Naive thymus-derived CD4-positive, alpha-beta T cell (primary cell): ENCODE measurements at regions of chr13 and their contacts with region 1.

Region 1: DNA sequence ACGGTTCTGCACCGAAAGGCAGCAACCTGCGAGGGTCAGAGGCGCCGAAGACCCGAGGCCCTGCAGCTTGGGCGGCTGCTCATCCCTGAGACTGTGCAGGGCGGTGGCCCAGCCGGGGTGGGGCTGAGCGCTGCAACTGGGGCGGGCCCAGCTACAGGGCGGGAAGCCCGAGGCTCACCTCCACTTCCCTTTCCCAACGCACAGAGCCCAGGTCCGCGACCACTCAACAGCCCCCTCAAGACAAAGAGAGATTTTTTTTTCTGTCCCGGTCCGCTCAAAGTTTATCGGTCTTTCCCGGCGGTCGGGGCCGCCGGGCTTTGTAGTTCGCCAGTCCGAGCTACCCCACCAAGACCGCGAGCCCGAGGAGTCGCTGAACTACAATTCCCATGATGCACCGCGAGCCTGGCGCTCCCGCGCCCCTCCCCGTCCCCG is 573 bp downstream of the KATNAL1 start:
- DNase-seq: peak; percentile 78 to 91 (median 88)
- ATAC-seq: peak; percentile 95
- H3K4me3 ChIP-seq: peak overlapping the region; percentile 96
- H3K4me3 Mint-ChIP-seq: peak overlapping the region; percentile 79 to 92 (median 89)
- H3K27ac ChIP-seq: peak overlapping the region; percentile 78
- H3K27ac Mint-ChIP-seq: peak overlapping the region in 8 of 9 donors; percentile 37 to 89 (median 82)
- H3K4me1 ChIP-seq: peaks cover 0 to 4% of the 10 kb centered on the region in 2 donors
- H3K4me1 Mint-ChIP-seq: peaks cover 0 to 48% (median 7%) of the 10 kb centered on the region in 7 donors
- H3K27me3 ChIP-seq: no peaks in the 10 kb centered on the region
- H3K27me3 Mint-ChIP-seq: no peaks in the 10 kb centered on the region

Region 2: GRCh38 chr13:29595380-29596063 is 711.3 kb before region 1 on chr13 and contains the start of gene SLC7A1:
- CTCF ChIA-PET with region 1: no interaction called
- POLR2A ChIA-PET with region 1: no interaction called
- intact Hi-C with region 1: loop called (anchors 1 to 2 kb)
- DNase-seq: peak; percentile 74 to 93 (median 85)
- ATAC-seq: peak; percentile 95
- H3K4me3 ChIP-seq: peak within 1 kb of the TSS; percentile 73
- H3K4me3 Mint-ChIP-seq: peak within 1 kb of the TSS; percentile 88 to 94 (median 90)
- H3K27ac ChIP-seq: peak within 1 kb of the TSS; percentile 82
- H3K27ac Mint-ChIP-seq: peak within 1 kb of the TSS; percentile 74 to 96 (median 87)
- H3K4me1 ChIP-seq: peaks cover 6 to 7% of the 10 kb centered on the region in 2 donors
- H3K4me1 Mint-ChIP-seq: peaks cover 26 to 49% (median 43%) of the 10 kb centered on the region in 7 donors
- H3K27me3 ChIP-seq: no peaks in the 10 kb centered on the region
- H3K27me3 Mint-ChIP-seq: peaks cover 0 to 3% (median 2%) of the 10 kb centered on the region in 5 donors
- total RNA-seq, gene SLC7A1: 12.2 to 63.8 (median 28.2) TPM

Region 3: DNA sequence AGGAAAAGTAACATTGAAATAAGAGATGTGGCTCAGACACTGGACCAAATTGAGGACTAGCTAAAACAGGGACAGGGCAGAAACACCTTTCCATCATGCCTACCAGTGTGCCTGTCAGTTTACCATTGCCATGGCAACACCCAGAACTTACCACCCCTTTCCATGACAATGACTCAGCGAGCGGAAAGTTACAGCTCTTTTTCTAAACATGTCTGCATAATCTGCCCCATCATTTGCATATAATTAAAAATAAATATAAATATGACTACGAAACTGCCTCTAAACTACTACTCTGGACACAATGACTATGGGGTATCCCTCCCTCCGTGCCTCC is 552.3 kb before region 1 on chr13:
- CTCF ChIA-PET with region 1: no interaction called
- POLR2A ChIA-PET with region 1: no interaction called
- intact Hi-C with region 1: no loop called
- DNase-seq: no peak
- ATAC-seq: no peak
- H3K4me3 ChIP-seq: no peak overlapping the region
- H3K4me3 Mint-ChIP-seq: no peak overlapping the region
- H3K27ac ChIP-seq: no peak overlapping the region
- H3K27ac Mint-ChIP-seq: no peak overlapping the region
- H3K4me1 ChIP-seq: peaks cover 0 to 3% of the 10 kb centered on the region in 2 donors
- H3K4me1 Mint-ChIP-seq: peaks cover 6 to 11% (median 6%) of the 10 kb centered on the region in 7 donors
- H3K27me3 ChIP-seq: no peaks in the 10 kb centered on the region
- H3K27me3 Mint-ChIP-seq: peaks cover 0 to 14% (median 4%) of the 10 kb centered on the region in 5 donors

Region 4: DNA sequence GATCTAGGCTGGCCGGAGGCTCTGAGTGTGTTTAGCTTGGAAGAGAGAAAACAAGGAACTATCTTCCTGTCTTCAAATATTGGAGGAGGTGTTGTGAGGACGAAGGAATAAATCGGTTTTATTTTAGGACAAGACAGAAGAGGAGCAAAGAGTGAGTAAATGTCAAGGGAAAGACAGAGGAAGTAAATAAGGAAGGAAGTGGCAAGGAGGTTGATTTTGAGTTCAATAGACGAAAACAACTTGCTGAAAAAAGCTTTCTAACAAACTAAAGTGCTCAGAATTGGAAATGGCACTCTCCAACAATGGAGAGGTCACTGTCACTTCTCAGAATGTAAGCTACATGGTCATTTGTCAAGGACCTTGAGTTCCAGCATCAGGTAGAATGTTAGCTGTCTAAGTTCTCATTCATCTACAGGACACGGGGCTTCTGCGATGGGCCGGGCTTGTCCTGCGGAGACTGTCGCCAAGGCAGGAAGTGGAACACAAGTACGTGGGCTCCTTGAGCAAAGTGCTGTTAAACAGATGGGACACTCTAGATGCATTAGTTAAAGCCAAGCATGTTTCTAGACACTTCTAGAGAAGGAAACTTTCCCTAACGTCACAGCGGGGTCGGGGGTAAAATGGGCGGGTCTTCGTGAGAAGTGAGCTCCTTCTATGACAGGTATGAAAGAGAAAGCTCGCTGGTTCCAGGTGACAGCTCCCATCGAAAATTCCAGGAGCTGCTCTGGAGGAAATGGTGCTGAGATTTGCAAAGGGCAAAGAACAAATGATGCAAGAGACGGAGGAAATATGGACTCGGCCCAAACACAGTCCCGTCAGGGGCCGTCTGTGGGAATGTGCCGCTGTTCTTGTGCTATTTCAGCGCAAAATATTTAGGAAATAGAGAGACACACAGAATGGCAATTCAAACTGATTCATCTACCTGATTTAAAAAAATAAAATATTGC is 352.4 kb before region 1 on chr13:
- CTCF ChIA-PET with region 1: no interaction called
- POLR2A ChIA-PET with region 1: no interaction called
- intact Hi-C with region 1: no loop called
- DNase-seq: peak in 8 of 9 donors; percentile 33 to 77 (median 70)
- ATAC-seq: peak; percentile 79
- H3K4me3 ChIP-seq: peak overlapping the region; percentile 43
- H3K4me3 Mint-ChIP-seq: peak overlapping the region; percentile 72 to 90 (median 84)
- H3K27ac ChIP-seq: peak overlapping the region; percentile 69
- H3K27ac Mint-ChIP-seq: peak overlapping the region; percentile 79 to 94 (median 89)
- H3K4me1 ChIP-seq: peaks cover 20 to 30% of the 10 kb centered on the region in 2 donors
- H3K4me1 Mint-ChIP-seq: peaks cover 22 to 81% (median 53%) of the 10 kb centered on the region in 7 donors
- H3K27me3 ChIP-seq: no peaks in the 10 kb centered on the region
- H3K27me3 Mint-ChIP-seq: peaks cover 0 to 15% (median 0%) of the 10 kb centered on the region in 5 donors

Region 5: GRCh38 chr13:30346153-30346788 is 39.5 kb after region 1 on chr13:
- CTCF ChIA-PET with region 1: interaction called, 4 read pairs
- POLR2A ChIA-PET with region 1: interaction called, 14 read pairs
- intact Hi-C with region 1: loop called in 1 of 2 experiments (anchors 2 kb)
- DNase-seq: peak in 7 of 9 donors; percentile 59 to 86 (median 73)
- ATAC-seq: peak; percentile 94
- H3K4me3 ChIP-seq: peak overlapping the region; percentile 7
- H3K4me3 Mint-ChIP-seq: peak overlapping the region; percentile 46 to 82 (median 75)
- H3K27ac ChIP-seq: no peak overlapping the region
- H3K27ac Mint-ChIP-seq: peak overlapping the region; percentile 23 to 84 (median 62)
- H3K4me1 ChIP-seq: peaks cover 29 to 31% of the 10 kb centered on the region in 2 donors
- H3K4me1 Mint-ChIP-seq: peaks cover 35 to 60% (median 48%) of the 10 kb centered on the region in 7 donors
- H3K27me3 ChIP-seq: no peaks in the 10 kb centered on the region
- H3K27me3 Mint-ChIP-seq: peaks cover 0 to 2% (median 0%) of the 10 kb centered on the region in 5 donors

Region 6: GRCh38 chr13:30422054-30422839 is 115.5 kb after region 1 on chr13 and contains the start of gene UBE2L5:
- CTCF ChIA-PET with region 1: no interaction called
- POLR2A ChIA-PET with region 1: interaction called, 3 read pairs
- intact Hi-C with region 1: loop called in 1 of 2 experiments (anchors 1 kb)
- DNase-seq: peak; percentile 41 to 89 (median 56)
- ATAC-seq: peak; percentile 92
- H3K4me3 ChIP-seq: peak within 1 kb of the TSS; percentile 67
- H3K4me3 Mint-ChIP-seq: peak within 1 kb of the TSS; percentile 80 to 94 (median 89)
- H3K27ac ChIP-seq: peak within 1 kb of the TSS; percentile 38
- H3K27ac Mint-ChIP-seq: peak within 1 kb of the TSS; percentile 64 to 93 (median 86)
- H3K4me1 ChIP-seq: no peaks in the 10 kb centered on the region
- H3K4me1 Mint-ChIP-seq: peaks cover 7 to 29% (median 15%) of the 10 kb centered on the region in 7 donors
- H3K27me3 ChIP-seq: no peaks in the 10 kb centered on the region
- H3K27me3 Mint-ChIP-seq: no peaks in the 10 kb centered on the region
- total RNA-seq, gene UBE2L5: not detected

Region 7: GRCh38 chr13:30739761-30740642 is 433.2 kb after region 1 on chr13:
- CTCF ChIA-PET with region 1: no interaction called
- POLR2A ChIA-PET with region 1: no interaction called
- intact Hi-C with region 1: loop called in 1 of 2 experiments (anchors 5 kb)
- DNase-seq: peak in 8 of 9 donors; percentile 16 to 61 (median 32)
- ATAC-seq: peak; percentile 47
- H3K4me3 ChIP-seq: peak overlapping the region; percentile 29
- H3K4me3 Mint-ChIP-seq: peak overlapping the region; percentile 79 to 87 (median 82)
- H3K27ac ChIP-seq: no peak overlapping the region
- H3K27ac Mint-ChIP-seq: peak overlapping the region; percentile 7 to 93 (median 66)
- H3K4me1 ChIP-seq: peaks cover 59 to 60% of the 10 kb centered on the region in 2 donors
- H3K4me1 Mint-ChIP-seq: peaks cover 68 to 81% (median 79%) of the 10 kb centered on the region in 7 donors
- H3K27me3 ChIP-seq: no peaks in the 10 kb centered on the region
- H3K27me3 Mint-ChIP-seq: no peaks in the 10 kb centered on the region